Activated T-helper 1 cell treated with anti-CD3 and anti-CD28 coated beads, Interleukin-12 subunit alpha, Interleukin-12 subunit beta, Interleukin-2, Interleukin-4 antibody, amounts not matched to agents 30 ng/mL and 10 ng/mL and 1 ng/mL, durations not matched to agents 14 hours and 24 hours and 36 hours (primary cell): ENCODE measurements at regions of chr10 and their contacts with region 1.

Region 1: GRCh38 chr10:32055813-32056600 is at the start of gene KIF5B:
- DNase-seq: peak; percentile 85
- H3K4me3 Mint-ChIP-seq: peak within 1 kb of the TSS; percentile 94
- H3K27ac Mint-ChIP-seq: peak within 1 kb of the TSS; percentile 92
- H3K4me1 Mint-ChIP-seq: peaks cover 41% of the 10 kb centered on the region
- H3K27me3 Mint-ChIP-seq: no peaks in the 10 kb centered on the region
- total RNA-seq, gene KIF5B: 80.7 and 83.4 TPM in 2 replicates

Region 2: GRCh38 chr10:31928549-31929260 is 127.3 kb before region 1 on chr10 and contains the start of gene ARHGAP12:
- intact Hi-C with region 1: loop called (anchors 2 kb)
- DNase-seq: peak; percentile 68
- H3K4me3 Mint-ChIP-seq: peak within 1 kb of the TSS; percentile 88
- H3K27ac Mint-ChIP-seq: peak within 1 kb of the TSS; percentile 73
- H3K4me1 Mint-ChIP-seq: peaks cover 56% of the 10 kb centered on the region
- H3K27me3 Mint-ChIP-seq: peaks cover 13% of the 10 kb centered on the region
- total RNA-seq, gene ARHGAP12: 2.4 and 3.5 TPM in 2 replicates

Region 3: DNA sequence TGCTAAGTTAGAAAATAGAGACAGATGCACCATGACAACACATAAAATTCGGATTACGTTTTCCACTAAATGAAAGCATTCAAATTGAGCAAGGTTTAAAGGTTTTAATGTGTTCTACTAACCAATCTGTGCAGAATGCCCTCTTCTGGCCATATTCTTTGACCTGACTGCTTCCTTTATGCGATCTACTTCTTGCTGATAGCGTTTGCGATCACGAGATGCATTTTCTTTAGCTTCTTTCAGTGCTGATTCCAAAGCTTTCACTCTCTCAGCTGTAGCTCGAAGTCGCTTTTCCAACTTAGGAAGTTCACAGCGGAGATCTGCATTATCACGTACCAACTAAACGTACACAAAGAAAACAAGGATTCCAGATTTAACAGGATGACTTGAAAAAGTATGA is 39.0 kb before region 1 on chr10:
- intact Hi-C with region 1: loop called (anchors 5 kb)
- DNase-seq: no peak
- H3K4me3 Mint-ChIP-seq: no peak overlapping the region
- H3K27ac Mint-ChIP-seq: no peak overlapping the region
- H3K4me1 Mint-ChIP-seq: no peaks in the 10 kb centered on the region
- H3K27me3 Mint-ChIP-seq: no peaks in the 10 kb centered on the region

Region 4: GRCh38 chr10:32149252-32149955 is 93.4 kb after region 1 on chr10:
- intact Hi-C with region 1: loop called (anchors 1 kb)
- DNase-seq: peak; percentile 36
- H3K4me3 Mint-ChIP-seq: peak overlapping the region; percentile 45
- H3K27ac Mint-ChIP-seq: peak overlapping the region; percentile 94
- H3K4me1 Mint-ChIP-seq: peaks cover 41% of the 10 kb centered on the region
- H3K27me3 Mint-ChIP-seq: no peaks in the 10 kb centered on the region

Region 5: DNA sequence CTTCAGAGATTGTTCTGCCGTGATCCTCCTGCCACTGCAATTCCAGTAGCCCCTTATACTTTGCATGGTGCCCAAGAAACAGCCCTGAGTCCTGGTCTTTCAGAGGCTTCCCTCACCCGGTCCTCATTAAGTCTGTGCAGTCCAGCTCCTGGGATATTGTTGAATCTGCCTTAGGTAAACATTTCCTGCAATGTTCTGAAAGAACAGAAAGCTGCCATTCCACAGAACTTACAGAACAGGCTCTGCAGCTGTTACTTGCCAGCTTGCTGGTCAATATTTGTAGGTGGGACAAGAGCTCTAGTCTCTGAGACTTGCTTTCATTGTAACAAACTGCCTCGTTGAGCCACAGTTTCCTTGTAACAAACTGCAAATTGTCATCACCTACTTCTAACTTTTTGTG is 115.2 kb after region 1 on chr10:
- intact Hi-C with region 1: loop called (anchors 5 kb)
- DNase-seq: no peak
- H3K4me3 Mint-ChIP-seq: no peak overlapping the region
- H3K27ac Mint-ChIP-seq: no peak overlapping the region
- H3K4me1 Mint-ChIP-seq: no peaks in the 10 kb centered on the region
- H3K27me3 Mint-ChIP-seq: peaks cover 2% of the 10 kb centered on the region

Region 6: DNA sequence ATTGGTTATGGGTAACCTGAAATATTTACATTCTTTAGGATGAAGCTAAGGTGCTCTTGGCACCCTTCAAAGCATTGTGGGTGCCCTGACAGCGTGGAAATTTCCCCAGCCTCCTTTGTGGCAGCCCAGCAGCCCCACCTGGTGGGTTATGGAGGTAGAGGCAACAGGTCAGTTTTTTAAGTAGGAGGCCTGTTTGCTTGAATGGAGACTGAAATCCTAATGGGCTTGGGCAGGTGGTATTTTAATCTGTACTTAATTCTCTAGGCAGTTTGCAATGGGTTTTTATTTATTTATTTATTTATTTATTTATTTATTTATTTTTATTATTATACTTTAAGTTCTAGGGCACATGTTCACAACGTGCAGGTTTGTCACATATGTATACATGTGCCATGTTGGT is 151.5 kb after region 1 on chr10:
- intact Hi-C with region 1: loop called (anchors 1 kb)
- DNase-seq: peak; percentile 45
- H3K4me3 Mint-ChIP-seq: no peak overlapping the region
- H3K27ac Mint-ChIP-seq: no peak overlapping the region
- H3K4me1 Mint-ChIP-seq: peaks cover 5% of the 10 kb centered on the region
- H3K27me3 Mint-ChIP-seq: no peaks in the 10 kb centered on the region

Region 7: DNA sequence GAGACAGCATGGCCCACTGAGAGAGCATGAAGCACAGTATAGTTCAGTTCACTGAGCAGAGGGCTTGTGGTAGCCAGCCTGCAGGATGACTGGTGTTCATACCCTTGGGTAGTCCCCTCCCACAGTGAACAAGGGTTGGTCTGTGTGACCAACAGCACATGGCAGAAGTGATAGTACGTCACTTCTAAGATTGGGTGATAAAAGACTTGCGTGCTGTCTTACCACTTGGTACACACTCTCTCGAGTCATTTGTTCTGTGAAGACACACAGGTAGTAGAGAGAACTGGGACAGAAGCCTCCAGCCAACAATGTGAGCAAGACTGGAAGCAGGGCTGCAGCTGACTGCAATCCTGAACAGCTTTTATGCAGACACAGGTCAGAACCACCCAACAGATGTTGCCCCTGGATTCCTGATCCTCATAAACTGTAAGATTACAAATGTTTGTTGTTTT is 276.3 kb after region 1 on chr10:
- intact Hi-C with region 1: loop called (anchors 5 kb)
- DNase-seq: peak; percentile 71
- H3K4me3 Mint-ChIP-seq: peak overlapping the region; percentile 80
- H3K27ac Mint-ChIP-seq: peak overlapping the region; percentile 97
- H3K4me1 Mint-ChIP-seq: peaks cover 93% of the 10 kb centered on the region
- H3K27me3 Mint-ChIP-seq: no peaks in the 10 kb centered on the region